MCF 10A (cell line): ENCODE measurements at regions of chr20 and their contacts with region 1.

Region 1: GRCh38 chr20:35726759-35727711 is 15.0 kb downstream of the RBM39 start:
- DNase-seq: no peak
- H3K4me3 Mint-ChIP-seq: no peak overlapping the region
- H3K27ac Mint-ChIP-seq: no peak overlapping the region
- H3K4me1 Mint-ChIP-seq: peaks cover 12% of the 10 kb centered on the region
- H3K27me3 Mint-ChIP-seq: no peaks in the 10 kb centered on the region
- CTCF ChIP-seq: no peak

Region 2: DNA sequence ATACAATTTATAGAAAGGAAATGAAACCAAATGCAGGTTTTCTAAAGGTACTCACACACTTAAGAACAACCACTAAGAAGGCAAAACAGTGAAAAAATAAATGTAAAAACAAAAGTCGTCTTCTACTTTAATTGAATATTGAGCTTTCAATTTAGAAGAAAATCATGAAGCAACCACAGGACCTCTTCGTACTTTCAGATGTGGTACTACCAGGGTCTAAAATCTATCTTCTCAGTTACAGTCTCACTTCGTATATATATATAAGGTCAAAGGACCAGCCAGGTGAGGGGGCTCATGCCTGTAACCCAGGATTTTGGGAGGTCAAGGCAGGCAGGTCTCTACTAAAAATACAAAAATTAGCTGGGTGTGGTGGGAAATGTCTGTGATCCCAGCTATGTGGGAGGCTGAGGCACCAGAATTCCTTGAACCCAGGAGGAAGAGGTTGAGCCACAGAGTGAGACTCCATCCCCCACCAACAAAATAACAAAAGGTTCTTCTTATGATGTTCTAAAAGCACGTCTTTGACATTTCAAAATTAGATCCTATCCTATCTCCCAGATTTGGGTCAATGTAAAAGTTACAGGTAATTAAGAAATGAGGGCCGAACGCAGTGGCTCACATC is 15.3 kb before region 1 on chr20:
- CTCF ChIA-PET with region 1: interaction called, 4 read pairs
- POLR2A ChIA-PET with region 1: interaction called, 130 read pairs
- intact Hi-C with region 1: no loop called
- DNase-seq: no peak
- H3K4me3 Mint-ChIP-seq: no peak overlapping the region
- H3K27ac Mint-ChIP-seq: peak overlapping the region; percentile 28
- H3K4me1 Mint-ChIP-seq: peaks cover 13% of the 10 kb centered on the region
- H3K27me3 Mint-ChIP-seq: no peaks in the 10 kb centered on the region
- CTCF ChIP-seq: no peak